ENCODE measurements at regions of chr7 and their contacts with region 1.

Region 1: DNA sequence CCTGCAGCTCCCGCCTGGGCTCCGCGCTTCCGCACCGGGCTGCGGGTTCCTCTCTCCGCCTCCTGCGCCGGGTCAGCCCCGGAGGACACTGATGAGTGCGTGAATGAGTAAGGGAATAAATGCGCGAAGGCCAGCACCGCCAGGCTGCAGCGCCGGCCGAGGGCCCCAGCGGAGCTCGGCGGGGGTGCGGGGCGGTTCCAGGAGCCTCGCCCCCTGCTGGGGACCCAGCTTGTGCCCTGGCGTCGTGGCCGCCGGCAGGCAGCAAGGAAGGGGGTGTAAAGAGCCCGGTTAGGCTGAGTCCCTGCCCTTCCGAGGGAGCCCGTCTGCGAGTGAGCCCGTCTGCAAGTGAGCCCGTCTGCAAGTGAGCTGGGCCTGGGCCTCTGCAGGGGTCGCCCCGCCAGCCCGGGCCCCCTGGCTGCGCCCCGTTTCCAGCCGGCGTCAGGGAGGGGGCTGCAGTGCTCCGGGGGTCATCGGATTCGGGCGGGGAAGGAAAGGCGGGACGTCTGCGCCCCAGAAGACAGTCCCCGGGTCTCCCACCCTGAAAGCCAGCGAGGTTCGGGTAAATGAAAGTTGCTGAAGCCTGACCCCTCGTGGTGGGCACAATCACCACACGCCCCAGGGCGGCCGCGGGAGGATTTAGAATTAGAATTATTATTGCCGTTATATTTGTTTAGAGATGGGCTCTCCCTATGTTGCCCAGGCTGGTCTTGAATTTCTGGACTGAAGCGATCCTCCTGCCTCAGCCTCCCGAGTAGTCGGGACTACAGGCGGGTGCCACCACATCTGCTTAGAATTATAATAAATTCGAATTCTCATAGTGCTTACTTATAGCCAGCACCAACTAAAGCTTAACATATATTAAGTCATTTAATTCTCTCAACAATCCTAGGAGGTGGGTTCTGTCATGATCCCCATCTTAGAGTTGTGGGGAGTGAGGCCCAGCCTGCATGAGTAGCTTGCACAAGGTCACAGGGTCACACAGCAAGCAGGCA is 8.6 kb upstream of the CRYGN start:
- DNase-seq: peak; percentile 72
- H3K4me3 ChIP-seq: peak overlapping the region; percentile 12 to 53 (median 18)
- H3K27ac ChIP-seq: no peak overlapping the region
- H3K4me1 ChIP-seq: no peaks in the 10 kb centered on the region
- H3K27me3 ChIP-seq: peaks cover 0 to 7% of the 10 kb centered on the region in 2 experiments
- CTCF ChIP-seq: peak; percentile 70 to 80
- POLR2A ChIP-seq: no peak

Region 2: GRCh38 chr7:151271699-151272355 is 176.7 kb before region 1 on chr7:
- CTCF ChIA-PET with region 1: no interaction called
- POLR2A ChIA-PET with region 1: no interaction called
- dilution Hi-C with region 1: no loop called
- intact Hi-C with region 1: no loop called
- DNase-seq: no peak
- H3K4me3 ChIP-seq: no peak overlapping the region
- H3K27ac ChIP-seq: no peak overlapping the region
- H3K4me1 ChIP-seq: no peaks in the 10 kb centered on the region
- H3K27me3 ChIP-seq: peaks cover 4 to 10% of the 10 kb centered on the region in 2 experiments
- CTCF ChIP-seq: no peak
- POLR2A ChIP-seq: no peak

Region 3: GRCh38 chr7:151315038-151315655 is 133.4 kb before region 1 on chr7:
- CTCF ChIA-PET with region 1: interaction called, 51 read pairs
- POLR2A ChIA-PET with region 1: no interaction called
- dilution Hi-C with region 1: no loop called
- intact Hi-C with region 1: loop called (anchors 1 kb)
- DNase-seq: peak; percentile 48
- H3K4me3 ChIP-seq: no peak overlapping the region
- H3K27ac ChIP-seq: no peak overlapping the region
- H3K4me1 ChIP-seq: no peaks in the 10 kb centered on the region
- H3K27me3 ChIP-seq: peaks cover 0 to 6% of the 10 kb centered on the region in 2 experiments
- CTCF ChIP-seq: peak; percentile 71 to 74
- POLR2A ChIP-seq: no peak

Region 4: GRCh38 chr7:151426486-151426905 is 22.1 kb before region 1 on chr7:
- CTCF ChIA-PET with region 1: interaction called, 10 read pairs
- POLR2A ChIA-PET with region 1: no interaction called
- dilution Hi-C with region 1: no loop called
- intact Hi-C with region 1: no loop called
- DNase-seq: peak; percentile 47
- H3K4me3 ChIP-seq: no peak overlapping the region
- H3K27ac ChIP-seq: no peak overlapping the region
- H3K4me1 ChIP-seq: no peaks in the 10 kb centered on the region
- H3K27me3 ChIP-seq: peaks cover 4 to 6% of the 10 kb centered on the region in 2 experiments
- CTCF ChIP-seq: no peak
- POLR2A ChIP-seq: no peak

Region 5: DNA sequence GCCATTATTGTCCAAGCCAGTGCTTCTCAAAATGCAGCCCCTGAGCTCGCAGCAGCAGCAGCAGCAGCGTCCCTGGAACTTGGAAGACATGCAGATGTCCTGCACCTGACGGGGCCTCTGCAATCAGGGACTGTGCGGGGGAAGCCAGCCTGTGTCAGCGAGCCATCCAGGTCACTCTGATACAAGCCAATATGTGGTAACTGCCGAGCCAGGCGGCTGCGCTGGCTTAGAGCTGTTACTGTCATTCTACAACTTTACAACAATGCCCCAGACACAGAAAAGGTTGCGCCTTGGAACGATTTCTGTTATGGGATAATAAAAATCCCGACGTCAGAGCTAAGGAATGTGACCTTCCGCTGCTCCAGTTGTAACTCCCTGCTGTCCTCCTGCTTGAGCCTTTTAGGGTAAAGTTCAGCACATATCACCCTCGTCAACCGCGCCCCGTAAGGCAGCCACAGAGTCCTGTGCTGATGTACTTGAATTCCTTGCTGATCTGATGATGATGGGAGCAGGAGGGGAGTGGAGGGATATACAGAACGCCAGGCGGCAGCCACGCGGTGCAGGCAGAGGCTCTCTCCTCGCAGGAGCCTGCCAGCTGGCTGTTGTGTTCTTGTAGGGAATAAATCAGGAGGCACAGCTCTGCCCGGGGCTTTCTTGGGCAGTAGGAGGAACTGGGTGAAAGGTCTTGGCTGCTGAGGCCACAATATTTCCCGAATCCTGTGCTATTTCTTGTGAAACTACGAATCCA is 11.3 kb after region 1 on chr7:
- CTCF ChIA-PET with region 1: interaction called, 38 read pairs
- POLR2A ChIA-PET with region 1: interaction called, 6 read pairs
- dilution Hi-C with region 1: no loop called
- intact Hi-C with region 1: loop called (anchors 1 kb)
- DNase-seq: peak; percentile 86
- H3K4me3 ChIP-seq: peak overlapping the region in 1 of 3 experiments; percentile 17
- H3K27ac ChIP-seq: peak overlapping the region; percentile 34
- H3K4me1 ChIP-seq: peaks cover 22% of the 10 kb centered on the region
- H3K27me3 ChIP-seq: no peaks in the 10 kb centered on the region
- CTCF ChIP-seq: peak in 1 of 2 donors; percentile 17
- POLR2A ChIP-seq: no peak

Region 6: DNA sequence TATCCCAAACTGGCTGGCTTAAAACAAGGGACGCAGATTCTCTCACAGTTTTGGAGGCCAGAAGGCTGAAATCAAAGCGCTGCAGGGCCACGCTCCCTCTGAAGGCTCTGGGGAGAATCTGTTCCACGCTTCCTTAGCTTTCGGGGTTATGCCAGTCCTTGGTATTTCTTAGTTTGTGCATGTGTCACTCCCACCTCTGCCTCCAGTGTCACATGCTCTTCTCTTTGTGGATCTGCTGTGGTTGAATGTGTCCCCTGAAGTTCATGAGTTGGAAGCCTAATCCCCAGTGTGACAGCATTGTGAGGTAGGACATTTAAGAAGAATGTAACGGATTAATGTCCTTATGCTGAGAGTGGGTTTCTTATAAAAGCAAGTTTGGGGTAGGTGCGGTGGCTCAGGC is 100.5 kb after region 1 on chr7:
- CTCF ChIA-PET with region 1: no interaction called
- POLR2A ChIA-PET with region 1: no interaction called
- dilution Hi-C with region 1: no loop called
- intact Hi-C with region 1: no loop called
- DNase-seq: no peak
- H3K4me3 ChIP-seq: no peak overlapping the region
- H3K27ac ChIP-seq: no peak overlapping the region
- H3K4me1 ChIP-seq: no peaks in the 10 kb centered on the region
- H3K27me3 ChIP-seq: peaks cover 12 to 15% of the 10 kb centered on the region in 2 experiments
- CTCF ChIP-seq: no peak
- POLR2A ChIP-seq: no peak

Region 7: DNA sequence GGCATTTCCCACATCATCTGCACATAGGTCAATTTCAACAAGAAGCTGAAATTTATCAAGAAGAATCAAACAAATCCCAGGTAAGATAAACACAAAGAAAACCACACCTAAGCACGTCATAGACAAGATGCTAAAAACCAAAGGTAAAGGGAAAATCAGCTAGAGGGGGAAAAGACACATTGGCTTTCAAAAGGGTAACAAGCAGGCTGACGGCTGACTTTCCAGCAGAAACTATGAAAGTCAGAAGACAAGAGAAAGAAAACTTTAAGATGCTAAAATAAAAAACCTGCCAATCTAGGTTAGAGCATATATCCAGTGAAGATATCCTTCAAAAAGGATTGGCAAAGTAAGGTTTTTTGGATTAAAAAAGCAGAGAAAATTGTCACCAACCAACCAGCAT is 131.1 kb after region 1 on chr7:
- CTCF ChIA-PET with region 1: no interaction called
- POLR2A ChIA-PET with region 1: no interaction called
- dilution Hi-C with region 1: no loop called
- intact Hi-C with region 1: no loop called
- DNase-seq: no peak
- H3K4me3 ChIP-seq: no peak overlapping the region
- H3K27ac ChIP-seq: no peak overlapping the region
- H3K4me1 ChIP-seq: no peaks in the 10 kb centered on the region
- H3K27me3 ChIP-seq: no peaks in the 10 kb centered on the region
- CTCF ChIP-seq: no peak
- POLR2A ChIP-seq: no peak

Region 8: GRCh38 chr7:151759591-151760042 is 311.1 kb after region 1 on chr7:
- CTCF ChIA-PET with region 1: interaction called, 18 read pairs
- POLR2A ChIA-PET with region 1: no interaction called
- dilution Hi-C with region 1: no loop called
- intact Hi-C with region 1: loop called (anchors 1 kb)
- DNase-seq: peak; percentile 60
- H3K4me3 ChIP-seq: no peak overlapping the region
- H3K27ac ChIP-seq: no peak overlapping the region
- H3K4me1 ChIP-seq: peaks cover 17% of the 10 kb centered on the region
- H3K27me3 ChIP-seq: peaks cover 0 to 1% of the 10 kb centered on the region in 2 experiments
- CTCF ChIP-seq: peak; percentile 80 to 86
- POLR2A ChIP-seq: no peak

Measured in endothelial cell of umbilical vein (primary cell).